ENCODE measurements at regions of chr14 and their contacts with region 1.

Region 1: GRCh38 chr14:51855234-51855633 is 5.2 kb upstream of the GNG2 start:
- DNase-seq: no peak
- H3K4me3 ChIP-seq: no peak overlapping the region
- H3K27ac ChIP-seq: no peak overlapping the region
- H3K4me1 ChIP-seq: no peaks in the 10 kb centered on the region
- H3K27me3 ChIP-seq: no peaks in the 10 kb centered on the region
- CTCF ChIP-seq: no peak
- POLR2A ChIP-seq: no peak

Region 2: DNA sequence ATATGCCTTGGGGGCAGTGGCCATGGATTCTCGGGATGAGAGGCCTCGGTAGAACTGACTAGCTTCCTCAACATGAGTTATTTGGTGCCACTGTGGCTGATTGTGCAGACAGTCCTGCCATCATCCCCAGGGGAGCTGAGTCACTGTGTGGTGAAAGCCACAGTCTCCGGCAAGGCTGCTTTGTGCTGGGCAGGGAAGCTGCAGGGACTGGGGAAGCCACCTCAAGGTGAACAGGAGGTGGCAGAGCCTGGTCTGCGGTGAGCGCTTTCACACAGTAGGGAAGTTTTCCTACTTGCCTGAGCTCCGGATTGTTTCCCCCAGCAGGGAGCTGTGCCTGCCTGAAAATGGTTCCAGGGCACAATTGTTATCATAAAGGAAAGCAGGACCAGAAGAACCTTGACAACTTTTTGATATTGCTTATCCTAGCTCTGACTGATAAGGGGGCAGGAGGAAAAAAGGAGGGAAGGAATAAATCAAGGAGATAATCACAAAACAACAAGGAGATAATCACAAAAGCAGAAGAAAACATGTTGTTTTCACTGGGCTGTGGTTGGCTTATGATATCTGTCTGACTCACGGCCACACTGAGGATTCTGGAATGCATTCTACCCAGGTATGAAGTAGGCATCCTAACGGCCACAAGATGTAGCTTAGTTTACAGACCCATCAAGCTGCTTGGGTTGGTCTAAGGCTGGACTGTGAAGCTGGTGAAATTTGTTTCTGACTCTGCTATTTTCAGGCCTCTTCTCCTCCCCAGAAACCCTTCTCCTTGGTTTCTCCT is 27.0 kb before region 1 on chr14:
- intact Hi-C with region 1: loop called (anchors 1 kb)
- DNase-seq: no peak
- H3K4me3 ChIP-seq: no peak overlapping the region
- H3K27ac ChIP-seq: no peak overlapping the region
- H3K4me1 ChIP-seq: no peaks in the 10 kb centered on the region
- H3K27me3 ChIP-seq: no peaks in the 10 kb centered on the region
- CTCF ChIP-seq: no peak
- POLR2A ChIP-seq: no peak

Region 3: DNA sequence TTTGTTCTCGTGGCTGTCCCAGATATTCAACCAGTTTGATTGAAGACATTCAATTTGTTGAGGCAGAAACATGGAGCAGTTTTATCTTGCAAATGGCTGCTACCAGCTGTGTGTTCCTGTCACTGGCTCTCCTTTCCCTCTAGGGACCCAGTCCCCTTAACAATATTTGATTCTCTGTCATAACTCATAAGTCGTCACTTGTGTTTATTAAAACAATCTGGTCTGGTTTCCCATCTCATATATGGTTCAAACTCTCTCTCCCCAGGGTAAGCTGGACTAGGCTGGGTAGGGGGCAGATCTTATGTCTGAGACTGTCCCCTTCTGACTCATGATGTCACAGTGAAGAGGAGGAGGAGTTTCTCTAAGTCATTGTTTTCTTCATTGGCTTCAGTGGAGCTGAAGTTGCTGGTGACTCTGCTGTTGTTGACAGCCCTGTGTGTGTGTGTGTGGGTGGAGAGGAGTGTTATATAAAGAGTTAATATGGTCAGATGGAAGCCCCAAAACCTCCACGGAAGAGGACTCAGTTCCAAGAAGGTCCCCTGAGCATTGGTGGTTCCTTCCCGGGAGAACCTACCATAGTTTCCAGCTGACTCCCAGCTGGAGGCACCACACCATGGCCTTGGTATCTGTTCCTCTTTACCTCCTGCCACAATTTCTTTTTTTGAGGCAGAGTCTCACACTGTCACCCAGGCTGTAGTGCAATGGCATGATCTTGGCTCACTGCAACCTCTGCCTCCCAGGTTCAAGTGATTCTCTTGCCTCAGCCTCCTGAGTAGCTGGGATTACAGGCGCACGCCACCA is 11.0 kb before region 1 on chr14:
- intact Hi-C with region 1: no loop called
- DNase-seq: no peak
- H3K4me3 ChIP-seq: no peak overlapping the region
- H3K27ac ChIP-seq: no peak overlapping the region
- H3K4me1 ChIP-seq: no peaks in the 10 kb centered on the region
- H3K27me3 ChIP-seq: no peaks in the 10 kb centered on the region
- CTCF ChIP-seq: no peak
- POLR2A ChIP-seq: no peak

Region 4: GRCh38 chr14:51922624-51923023 is 67.4 kb after region 1 on chr14:
- intact Hi-C with region 1: no loop called
- DNase-seq: no peak
- H3K4me3 ChIP-seq: peak overlapping the region in 1 of 3 donors; percentile 2
- H3K27ac ChIP-seq: peak overlapping the region; percentile 33 to 56
- H3K4me1 ChIP-seq: no peaks in the 10 kb centered on the region
- H3K27me3 ChIP-seq: no peaks in the 10 kb centered on the region
- CTCF ChIP-seq: no peak
- POLR2A ChIP-seq: no peak

Measured in breast epithelium (tissue), 4 donors.